Breast epithelium (tissue), 4 donors: ENCODE measurements at regions of chr3 and their contacts with region 1.

Region 1: GRCh38 chr3:196621611-196622010 is 17.9 kb upstream of the NRROS start:
- DNase-seq: no peak
- H3K4me3 ChIP-seq: no peak overlapping the region
- H3K27ac ChIP-seq: no peak overlapping the region
- H3K4me1 ChIP-seq: no peaks in the 10 kb centered on the region
- H3K27me3 ChIP-seq: no peaks in the 10 kb centered on the region
- CTCF ChIP-seq: no peak
- POLR2A ChIP-seq: no peak

Region 2: DNA sequence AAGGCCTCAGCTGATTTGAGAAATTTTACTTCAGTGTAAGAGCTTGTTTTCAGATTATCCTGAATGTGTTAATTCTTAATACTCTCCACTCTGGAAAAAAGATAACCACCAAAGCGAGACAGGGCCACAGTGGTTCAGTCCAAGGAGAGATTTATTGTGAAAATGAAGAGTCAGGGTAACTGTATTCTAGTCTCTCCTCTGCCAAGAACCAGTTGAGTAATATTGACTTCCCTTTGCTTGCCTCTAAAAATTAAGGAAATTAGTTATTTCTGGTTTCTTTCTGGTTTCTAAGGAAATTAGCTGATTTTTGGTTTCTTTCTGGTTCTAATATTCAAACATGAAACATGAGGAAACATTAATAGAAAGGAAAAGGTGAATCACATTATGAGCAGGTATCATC is 1113.4 kb before region 1 on chr3:
- intact Hi-C with region 1: no loop called
- DNase-seq: no peak
- H3K4me3 ChIP-seq: no peak overlapping the region
- H3K27ac ChIP-seq: no peak overlapping the region
- H3K4me1 ChIP-seq: no peaks in the 10 kb centered on the region
- H3K27me3 ChIP-seq: no peaks in the 10 kb centered on the region
- CTCF ChIP-seq: no peak
- POLR2A ChIP-seq: no peak

Region 3: DNA sequence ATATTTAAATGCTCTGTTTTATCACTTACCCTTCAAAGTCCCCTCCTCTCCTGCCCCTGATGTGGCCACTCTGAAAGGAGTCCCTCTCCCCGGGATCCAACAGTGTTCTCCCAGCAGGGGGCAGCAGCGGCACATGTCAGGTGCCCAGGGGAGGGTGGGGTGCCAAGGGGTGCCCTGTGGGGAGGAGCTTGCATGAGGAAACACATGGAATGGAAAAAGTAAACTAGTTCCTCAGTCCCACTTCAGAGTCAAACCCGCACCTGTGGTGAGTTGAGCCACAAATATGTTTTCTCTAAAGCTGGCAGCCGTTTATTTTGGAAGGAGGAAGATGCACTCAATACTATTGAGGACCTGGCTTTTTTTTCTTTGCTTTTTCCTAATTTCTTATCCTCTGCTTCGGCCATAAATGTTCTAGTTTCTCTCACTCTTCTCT is 12.3 kb before region 1 on chr3:
- intact Hi-C with region 1: loop called (anchors 1 kb)
- DNase-seq: peak; percentile 85 to 88
- H3K4me3 ChIP-seq: no peak overlapping the region
- H3K27ac ChIP-seq: no peak overlapping the region
- H3K4me1 ChIP-seq: no peaks in the 10 kb centered on the region
- H3K27me3 ChIP-seq: no peaks in the 10 kb centered on the region
- CTCF ChIP-seq: peak; percentile 58 to 81 (median 74)
- POLR2A ChIP-seq: no peak